Cardiac septum (tissue), 1 donor: ENCODE measurements at regions of chr2 and their contacts with region 1.

Region 1: GRCh38 chr2:231315896-231316295 is 79.6 kb upstream of the B3GNT7 start:
- DNase-seq: no peak

Region 2: DNA sequence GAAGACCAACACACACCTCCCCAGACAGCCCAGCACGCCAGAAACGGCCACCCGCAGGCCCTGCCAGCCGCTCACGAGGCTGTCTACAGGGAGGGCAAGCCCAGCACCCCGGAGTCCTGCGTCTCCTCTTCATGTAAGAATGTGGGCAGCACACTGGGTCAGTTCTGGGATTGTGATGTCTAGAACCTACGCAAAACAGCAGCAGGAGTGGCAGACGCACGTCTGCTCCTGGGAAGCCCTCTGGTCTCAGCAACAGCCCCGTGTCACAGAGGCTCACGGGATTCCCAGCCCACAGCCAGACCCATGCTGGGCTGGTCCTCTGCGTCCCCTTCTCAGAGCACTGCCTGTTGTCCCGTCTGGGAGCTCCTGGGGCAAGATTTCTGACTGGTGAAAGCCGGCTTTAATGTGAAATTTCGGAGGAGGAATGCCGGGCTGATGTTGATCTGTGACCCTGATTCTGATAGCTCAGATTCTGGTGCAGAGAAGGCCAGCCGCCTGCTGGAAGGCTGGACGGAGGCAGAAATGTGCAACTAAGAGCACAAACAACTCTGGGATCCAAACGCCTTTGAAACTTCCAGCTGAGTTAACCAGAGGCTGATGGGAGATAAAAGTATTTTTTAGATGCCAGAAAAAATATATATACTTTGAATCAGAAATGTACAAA is 40.0 kb after region 1 on chr2:
- intact Hi-C with region 1: loop called (anchors 5 kb)
- DNase-seq: no peak

Region 3: DNA sequence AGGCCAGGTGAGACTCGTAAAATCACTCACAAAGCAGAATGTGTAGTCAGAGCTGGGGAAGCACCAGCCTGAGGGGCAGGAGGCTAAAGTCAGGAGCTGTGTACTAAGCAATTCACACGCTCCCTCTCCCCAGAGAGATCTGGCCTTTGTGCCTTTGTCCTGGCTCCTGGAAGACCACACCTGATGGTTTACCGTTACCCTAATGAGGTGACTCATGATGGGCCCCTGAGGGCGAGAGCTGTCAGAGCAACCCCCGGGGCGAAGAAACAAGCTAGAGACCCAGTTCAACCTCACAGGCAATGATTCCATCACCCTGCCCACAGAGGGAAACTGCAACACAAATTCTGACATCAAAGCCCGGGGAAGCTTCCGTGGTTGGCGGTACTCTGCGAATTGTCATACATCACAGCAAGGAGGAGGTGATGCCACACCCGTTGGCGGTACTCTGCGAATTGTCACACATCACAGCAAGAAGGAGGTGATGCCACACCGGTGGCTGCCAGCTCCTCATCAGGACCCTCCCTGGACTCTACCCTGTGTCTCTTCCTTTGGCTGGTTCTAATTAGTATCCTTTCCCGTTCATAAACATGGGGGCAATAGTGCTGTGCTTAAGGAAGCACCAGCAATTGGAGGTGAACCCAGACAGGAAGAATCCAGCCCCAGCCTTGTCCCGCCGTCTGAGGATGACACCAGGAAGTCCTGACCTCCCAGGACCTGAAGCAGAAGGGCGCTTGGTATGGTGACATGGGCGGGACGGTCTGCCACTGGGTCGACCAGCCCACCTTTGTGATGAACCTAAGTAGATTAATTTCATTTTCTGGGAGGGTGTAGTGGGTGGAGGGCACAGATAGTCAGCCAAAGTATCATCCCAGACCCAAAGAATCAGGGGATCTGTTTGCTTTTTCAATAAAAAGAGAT is 110.2 kb after region 1 on chr2:
- intact Hi-C with region 1: no loop called
- DNase-seq: no peak

Region 4: GRCh38 chr2:232502911-232503808 is 1187.3 kb after region 1 on chr2:
- intact Hi-C with region 1: no loop called
- DNase-seq: no peak